ENCODE measurements at regions of chr15 and their contacts with region 1.

Region 1: GRCh38 chr15:38991126-38991525 is 426.5 kb upstream of the RASGRP1 start:
- DNase-seq: no peak

Region 2: DNA sequence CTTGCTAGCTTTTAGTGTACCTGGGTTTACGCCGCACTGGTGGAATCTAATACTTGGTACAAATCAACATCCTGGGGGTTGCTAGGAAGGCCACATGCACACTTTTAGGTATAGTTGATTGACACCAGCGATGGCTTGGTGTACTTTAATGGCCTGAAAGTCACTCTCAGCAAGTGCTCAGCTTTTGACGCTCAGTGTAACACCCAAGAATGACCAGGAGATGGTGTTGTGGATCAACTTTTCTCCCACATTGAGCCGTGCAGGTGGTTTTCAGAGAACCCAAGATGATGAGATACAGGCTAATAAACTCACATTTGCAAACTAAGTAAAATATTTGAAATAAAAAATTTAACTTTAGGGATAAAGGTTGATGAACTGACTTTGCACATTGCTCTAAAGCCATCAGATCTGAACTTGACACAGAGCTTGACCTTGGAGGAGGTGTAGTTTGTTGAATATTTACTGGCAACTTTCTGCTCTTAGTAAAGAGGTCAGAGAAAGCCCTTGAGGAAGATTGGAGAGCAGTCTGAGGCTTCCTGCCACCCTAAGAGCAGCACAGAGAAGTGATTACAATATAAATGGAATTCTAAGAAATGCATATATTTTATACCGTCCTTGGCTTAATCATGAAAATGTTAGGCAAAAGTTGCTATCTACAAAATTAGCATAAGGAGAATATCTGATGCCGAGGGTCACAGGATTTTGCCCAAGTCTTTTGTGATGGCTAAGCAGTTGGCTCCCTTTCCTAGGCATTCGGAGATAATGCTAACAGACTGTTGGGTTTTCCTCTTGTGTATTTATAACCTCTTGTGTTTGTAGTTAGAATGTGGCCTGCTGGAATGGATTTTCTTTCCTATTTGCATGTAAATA is 283.1 kb before region 1 on chr15:
- intact Hi-C with region 1: loop called (anchors 5 kb)
- DNase-seq: peak in 3 of 10 donors; percentile 18 to 33 (median 19)

Region 3: GRCh38 chr15:38817427-38818156 is 173.5 kb before region 1 on chr15:
- intact Hi-C with region 1: loop called (anchors 10 kb)
- DNase-seq: peak; percentile 50 to 96 (median 80)